ENCODE measurements at regions of chr9 and their contacts with region 1.

Region 1: DNA sequence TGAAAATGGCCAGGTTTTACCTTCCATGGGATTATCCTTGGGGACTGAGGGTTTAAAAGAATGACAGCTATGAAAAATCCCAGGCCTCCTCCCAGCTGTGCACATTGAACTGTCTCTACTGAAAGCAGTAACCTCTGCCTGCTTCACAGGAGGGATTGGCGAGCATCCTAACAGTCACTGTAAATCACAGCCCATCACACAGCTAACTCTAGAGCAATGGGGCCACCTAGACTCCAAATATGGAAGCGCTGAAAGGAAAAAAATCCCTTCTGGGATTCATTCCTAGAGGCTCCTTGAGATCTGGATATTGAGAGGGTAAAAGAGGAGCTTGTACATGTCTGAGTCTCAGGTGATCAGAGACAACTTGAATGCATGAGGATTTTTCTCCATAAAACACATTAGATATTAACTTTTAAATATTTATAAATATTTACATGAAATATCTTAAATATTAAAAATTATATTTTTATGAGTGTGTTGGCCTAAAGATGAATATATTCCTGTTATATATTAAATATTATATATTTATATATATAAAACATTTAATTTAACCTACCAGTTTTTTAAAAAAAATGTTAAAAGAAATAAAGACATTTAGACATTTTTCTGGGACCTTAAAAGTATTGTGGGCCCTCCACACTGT is 133.8 kb upstream of the SLC24A2 start:
- DNase-seq: no peak
- H3K4me3 ChIP-seq: no peak overlapping the region
- H3K27ac ChIP-seq: no peak overlapping the region
- H3K4me1 ChIP-seq: no peaks in the 10 kb centered on the region
- H3K27me3 ChIP-seq: no peaks in the 10 kb centered on the region
- CTCF ChIP-seq: no peak
- POLR2A ChIP-seq: no peak

Region 2: DNA sequence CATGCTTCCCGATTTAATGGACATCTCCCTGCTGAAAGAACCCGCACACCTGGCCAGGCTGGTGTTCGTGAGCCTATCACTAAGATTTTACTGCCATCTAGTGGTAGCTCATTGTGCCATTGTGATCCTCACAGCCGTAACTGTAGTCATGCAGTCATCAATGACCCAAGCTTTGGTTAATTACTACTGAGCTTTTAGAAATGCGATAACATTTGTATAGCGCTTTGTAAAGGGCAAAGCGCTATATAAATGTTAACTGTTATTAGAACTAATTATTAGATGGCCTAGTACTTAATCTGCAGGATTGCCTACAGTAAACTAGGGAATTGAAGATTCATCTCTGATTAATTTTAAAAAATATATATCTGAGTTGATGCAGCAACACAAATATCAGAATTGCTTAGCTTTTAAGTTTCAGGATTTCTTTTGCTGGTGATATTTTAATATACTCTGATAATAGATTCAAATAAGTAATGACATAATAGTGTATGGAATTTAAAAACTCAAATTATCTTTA is 1018.6 kb after region 1 on chr9:
- intact Hi-C with region 1: loop called (anchors 5 kb)
- DNase-seq: no peak
- H3K4me3 ChIP-seq: no peak overlapping the region
- H3K27ac ChIP-seq: no peak overlapping the region
- H3K4me1 ChIP-seq: no peaks in the 10 kb centered on the region
- H3K27me3 ChIP-seq: no peaks in the 10 kb centered on the region
- CTCF ChIP-seq: peak; percentile 46 to 89 (median 73)
- POLR2A ChIP-seq: no peak

Region 3: DNA sequence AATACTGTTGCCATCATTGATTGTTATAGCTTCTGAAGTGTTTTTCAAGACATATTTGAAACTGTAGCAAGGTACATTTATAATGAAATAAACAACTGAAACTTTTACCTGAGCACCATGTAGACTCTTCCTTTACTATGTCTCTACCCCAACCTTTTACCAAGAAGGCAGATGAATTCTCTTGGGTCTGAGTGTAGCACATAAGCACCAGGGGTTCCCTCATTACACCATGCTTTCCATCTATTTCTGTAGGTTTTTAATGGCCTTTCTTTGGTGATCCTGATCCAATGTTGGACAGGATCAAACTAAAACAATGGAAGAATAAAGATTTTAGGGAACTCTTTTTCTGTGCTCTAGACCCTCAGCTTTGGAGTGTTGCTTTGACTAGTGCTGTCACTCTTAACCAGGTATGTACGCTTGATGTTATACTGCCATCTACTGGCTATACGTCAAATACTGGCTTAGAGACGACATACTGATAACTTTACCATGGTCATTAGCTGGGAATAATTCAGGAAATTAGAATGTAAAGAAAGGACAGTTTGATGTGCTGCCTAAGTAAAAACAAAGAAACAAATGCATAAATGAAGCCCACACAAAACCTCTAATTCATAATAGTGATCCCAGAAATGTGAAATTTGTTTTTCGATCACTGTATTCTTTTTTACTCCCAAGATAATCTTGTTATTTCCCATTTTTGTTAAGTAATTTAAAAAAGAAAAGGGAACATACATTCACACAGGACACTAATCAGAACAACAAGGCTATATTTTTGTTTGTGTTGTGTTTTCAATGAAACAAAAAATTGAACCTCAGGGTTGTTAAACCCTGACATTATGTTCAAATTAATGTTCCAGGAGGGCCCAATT is 1188.3 kb after region 1 on chr9:
- intact Hi-C with region 1: loop called (anchors 5 kb)
- DNase-seq: no peak
- H3K4me3 ChIP-seq: no peak overlapping the region
- H3K27ac ChIP-seq: no peak overlapping the region
- H3K4me1 ChIP-seq: no peaks in the 10 kb centered on the region
- H3K27me3 ChIP-seq: no peaks in the 10 kb centered on the region
- CTCF ChIP-seq: peak; percentile 38 to 78 (median 65)
- POLR2A ChIP-seq: no peak

Measured in vagina (tissue), 2 donors.